Body of pancreas (tissue), 4 donors: ENCODE measurements at regions of chr7 and their contacts with region 1.

Region 1: GRCh38 chr7:85041605-85042216 is 145.1 kb downstream of the SEMA3D start:
- DNase-seq: peak; percentile 69 to 83 (median 76)
- ATAC-seq: peak; percentile 87
- H3K4me3 ChIP-seq: no peak overlapping the region
- H3K27ac ChIP-seq: no peak overlapping the region
- H3K4me1 ChIP-seq: peaks cover 4% of the 10 kb centered on the region
- H3K27me3 ChIP-seq: peaks cover 0 to 8% of the 10 kb centered on the region in 2 donors
- CTCF ChIP-seq: peak; percentile 17 to 77 (median 74)
- POLR2A ChIP-seq: no peak

Region 2: DNA sequence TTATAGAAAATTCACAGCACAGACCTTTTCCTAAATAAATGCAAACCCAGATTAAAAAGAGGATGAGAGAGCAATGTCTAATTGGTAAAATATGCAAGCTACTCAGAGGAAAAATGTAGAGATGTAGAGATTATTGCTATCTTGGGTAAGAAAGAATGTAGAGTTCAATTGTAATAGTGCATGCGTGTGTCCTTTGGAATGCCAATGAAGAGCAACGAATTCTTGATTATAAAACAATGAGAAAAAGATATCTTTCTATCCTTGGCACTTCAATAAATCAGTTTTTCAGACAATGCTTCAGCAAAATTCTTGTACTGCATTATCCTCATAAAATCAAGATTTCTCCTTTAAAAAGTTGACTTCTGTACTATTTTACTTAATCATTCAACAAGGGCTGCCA is 94.3 kb after region 1 on chr7:
- intact Hi-C with region 1: no loop called
- DNase-seq: no peak
- ATAC-seq: no peak
- H3K4me3 ChIP-seq: no peak overlapping the region
- H3K27ac ChIP-seq: no peak overlapping the region
- H3K4me1 ChIP-seq: no peaks in the 10 kb centered on the region
- H3K27me3 ChIP-seq: no peaks in the 10 kb centered on the region
- CTCF ChIP-seq: no peak
- POLR2A ChIP-seq: no peak

Region 3: DNA sequence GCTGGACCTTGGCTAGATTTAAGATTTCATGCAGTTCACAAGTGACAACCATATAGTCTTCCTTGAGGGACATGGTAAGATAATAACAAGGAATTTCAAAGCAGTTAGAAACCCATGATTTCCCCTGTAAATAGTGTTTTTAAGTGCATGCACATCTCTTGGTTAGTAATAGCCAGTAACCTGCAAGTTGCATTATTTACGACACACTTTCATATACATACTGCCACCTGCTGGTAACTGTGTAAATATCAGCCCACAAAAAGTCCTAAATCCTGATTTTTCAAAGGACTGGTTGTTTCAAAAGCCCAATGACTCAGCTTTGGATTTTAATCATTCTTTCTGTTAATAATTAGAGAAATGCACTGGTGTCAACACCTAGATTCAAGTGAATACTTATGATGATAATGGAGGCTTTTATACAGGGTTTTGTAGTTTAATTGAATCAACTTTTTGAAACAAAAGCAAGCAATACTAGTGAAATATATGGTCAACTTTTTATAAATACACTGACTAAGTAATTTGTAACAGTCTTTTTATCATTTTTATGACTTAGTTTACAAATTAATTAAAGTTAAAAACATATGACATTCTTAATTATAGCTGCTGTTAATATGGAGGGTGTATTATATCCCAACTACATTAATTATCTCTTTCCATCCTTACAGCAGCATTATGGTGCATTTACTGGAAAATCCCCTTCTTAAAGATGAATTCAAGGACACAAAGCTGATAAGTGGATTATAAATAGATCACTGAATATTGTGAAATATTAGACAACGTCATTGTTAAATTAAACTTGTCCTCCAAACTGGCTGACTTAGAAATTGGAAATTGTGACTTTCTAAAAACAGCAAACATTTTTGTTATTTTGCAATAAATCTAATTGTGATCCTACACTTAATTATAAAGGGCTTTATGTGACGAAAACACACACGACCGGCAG is 512.8 kb after region 1 on chr7:
- intact Hi-C with region 1: loop called (anchors 10 kb)
- DNase-seq: peak; percentile 4 to 59 (median 26)
- ATAC-seq: peak; percentile 89
- H3K4me3 ChIP-seq: no peak overlapping the region
- H3K27ac ChIP-seq: peak overlapping the region in 1 of 4 donors; percentile 36
- H3K4me1 ChIP-seq: peaks cover 8% of the 10 kb centered on the region
- H3K27me3 ChIP-seq: no peaks in the 10 kb centered on the region
- CTCF ChIP-seq: peak; percentile 41 to 77 (median 66)
- POLR2A ChIP-seq: no peak

Region 4: GRCh38 chr7:85749696-85750453 is 708.2 kb after region 1 on chr7:
- intact Hi-C with region 1: loop called (anchors 10 kb)
- DNase-seq: no peak
- ATAC-seq: no peak
- H3K4me3 ChIP-seq: no peak overlapping the region
- H3K27ac ChIP-seq: no peak overlapping the region
- H3K4me1 ChIP-seq: no peaks in the 10 kb centered on the region
- H3K27me3 ChIP-seq: no peaks in the 10 kb centered on the region
- CTCF ChIP-seq: no peak
- POLR2A ChIP-seq: no peak